HAP-1 (cell line): ENCODE measurements at regions of chr4 and their contacts with region 1.

Region 1: DNA sequence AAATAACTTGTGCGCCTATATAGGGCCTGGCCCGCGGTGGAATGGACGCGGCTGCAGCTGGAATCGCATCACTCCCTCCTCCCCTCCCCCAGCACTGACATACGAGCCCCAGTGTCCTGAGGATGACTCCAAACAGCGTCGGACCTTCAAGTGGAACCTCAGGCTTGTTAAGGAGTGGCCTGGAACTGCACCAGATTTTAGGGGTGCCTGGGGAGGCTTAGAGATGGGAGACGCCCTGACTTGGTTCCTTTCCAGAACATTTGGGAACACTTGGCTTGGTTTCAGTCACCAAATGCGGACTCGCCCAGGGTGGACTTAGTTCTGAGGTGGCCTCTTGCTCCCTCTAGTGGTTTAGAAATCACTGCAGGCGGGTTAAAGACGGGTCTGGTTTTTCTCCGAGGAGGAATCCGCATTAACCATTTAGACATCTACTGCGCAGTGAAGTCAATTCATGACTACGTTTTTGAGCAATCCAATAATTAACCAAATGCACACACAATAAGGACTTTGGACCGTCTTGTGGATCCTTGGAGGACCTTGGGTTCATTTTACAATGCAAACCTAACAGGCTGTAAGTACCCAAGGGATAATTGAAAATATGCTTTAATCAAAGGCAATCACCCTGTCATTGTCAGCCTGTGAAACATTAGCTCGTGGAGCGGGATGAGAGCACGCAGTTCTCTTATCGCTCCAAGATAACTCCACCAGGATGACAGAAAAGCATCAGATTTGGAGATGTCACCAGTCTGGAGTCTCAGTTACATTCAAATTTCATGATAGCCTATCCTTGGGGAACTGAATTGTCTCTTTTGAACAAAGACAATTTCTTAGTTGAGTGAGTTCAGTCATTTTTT is 11.2 kb upstream of the PDGFRA start:
- DNase-seq: peak; percentile 87 to 90
- H3K4me3 ChIP-seq: peak overlapping the region; percentile 25
- H3K4me1 ChIP-seq: peaks cover 19% of the 10 kb centered on the region
- H3K27me3 ChIP-seq: no peaks in the 10 kb centered on the region

Region 2: GRCh38 chr4:54032558-54033135 is 185.2 kb before region 1 on chr4:
- in situ Hi-C with region 1: loop called (anchors 25 kb)
- DNase-seq: no peak
- H3K4me3 ChIP-seq: no peak overlapping the region
- H3K4me1 ChIP-seq: peaks cover 9% of the 10 kb centered on the region
- H3K27me3 ChIP-seq: no peaks in the 10 kb centered on the region